ENCODE measurements at regions of chr1 and their contacts with region 1.

Region 1: DNA sequence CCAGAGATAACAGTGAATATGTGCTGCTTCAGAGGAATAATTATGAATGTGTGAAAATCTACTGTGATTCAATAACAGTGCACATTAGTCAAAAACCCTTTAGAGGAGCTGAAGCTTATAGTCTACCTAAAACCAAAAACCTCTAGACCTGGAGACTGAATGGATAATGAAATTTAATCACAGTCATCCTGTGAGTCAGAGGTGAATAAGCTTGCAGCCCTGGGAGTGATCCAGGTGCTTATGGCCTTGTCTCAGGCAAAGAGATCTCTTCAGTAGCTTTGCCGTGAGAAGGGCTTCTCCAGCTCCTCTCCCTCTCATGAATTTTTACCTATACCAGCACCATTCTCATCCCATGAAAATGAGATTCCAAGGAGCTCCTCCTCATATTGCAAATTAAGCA is 81.3 kb upstream of the RGS4 start:
- DNase-seq: peak; percentile 97
- ATAC-seq: peak; percentile 96
- H3K4me3 ChIP-seq: no peak overlapping the region
- H3K27ac ChIP-seq: peak overlapping the region; percentile 75
- H3K4me1 ChIP-seq: peaks cover 30% of the 10 kb centered on the region
- H3K27me3 ChIP-seq: no peaks in the 10 kb centered on the region
- CTCF ChIP-seq: no peak

Region 2: DNA sequence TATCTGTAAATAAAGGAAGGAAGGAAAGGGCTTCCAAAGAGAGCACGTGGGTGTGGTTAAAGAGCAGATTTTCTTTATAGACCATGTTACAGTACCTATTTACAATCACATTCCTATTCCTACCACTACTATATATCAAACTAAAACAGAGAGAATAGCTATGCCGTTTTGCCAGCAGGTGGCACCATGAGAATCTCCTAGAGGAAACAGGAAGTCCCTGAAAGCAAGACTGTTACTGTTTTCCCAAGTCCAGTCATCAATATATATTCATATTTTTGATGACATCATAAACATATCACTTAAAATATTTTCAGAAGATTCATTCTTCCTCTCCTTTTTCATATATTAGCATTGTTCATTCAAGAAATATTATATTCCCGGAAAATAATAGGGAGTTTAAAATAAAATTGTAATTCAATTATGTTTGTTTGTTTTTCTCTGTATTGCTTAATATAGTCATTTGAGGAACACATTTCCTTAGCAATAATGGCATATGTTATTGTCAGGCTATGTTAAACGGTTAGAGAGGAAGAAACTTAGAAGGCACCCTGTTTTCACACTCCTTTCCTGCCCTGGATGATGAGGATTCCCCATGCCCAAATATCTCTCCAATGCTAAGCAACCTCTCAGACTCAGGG is 133.5 kb before region 1 on chr1:
- CTCF ChIA-PET with region 1: no interaction called
- POLR2A ChIA-PET with region 1: no interaction called
- intact Hi-C with region 1: loop called (anchors 5 kb)
- DNase-seq: peak; percentile 93
- ATAC-seq: peak; percentile 52
- H3K4me3 ChIP-seq: no peak overlapping the region
- H3K27ac ChIP-seq: peak overlapping the region; percentile 81
- H3K4me1 ChIP-seq: peaks cover 49% of the 10 kb centered on the region
- H3K27me3 ChIP-seq: no peaks in the 10 kb centered on the region
- CTCF ChIP-seq: peak; percentile 97

Region 3: DNA sequence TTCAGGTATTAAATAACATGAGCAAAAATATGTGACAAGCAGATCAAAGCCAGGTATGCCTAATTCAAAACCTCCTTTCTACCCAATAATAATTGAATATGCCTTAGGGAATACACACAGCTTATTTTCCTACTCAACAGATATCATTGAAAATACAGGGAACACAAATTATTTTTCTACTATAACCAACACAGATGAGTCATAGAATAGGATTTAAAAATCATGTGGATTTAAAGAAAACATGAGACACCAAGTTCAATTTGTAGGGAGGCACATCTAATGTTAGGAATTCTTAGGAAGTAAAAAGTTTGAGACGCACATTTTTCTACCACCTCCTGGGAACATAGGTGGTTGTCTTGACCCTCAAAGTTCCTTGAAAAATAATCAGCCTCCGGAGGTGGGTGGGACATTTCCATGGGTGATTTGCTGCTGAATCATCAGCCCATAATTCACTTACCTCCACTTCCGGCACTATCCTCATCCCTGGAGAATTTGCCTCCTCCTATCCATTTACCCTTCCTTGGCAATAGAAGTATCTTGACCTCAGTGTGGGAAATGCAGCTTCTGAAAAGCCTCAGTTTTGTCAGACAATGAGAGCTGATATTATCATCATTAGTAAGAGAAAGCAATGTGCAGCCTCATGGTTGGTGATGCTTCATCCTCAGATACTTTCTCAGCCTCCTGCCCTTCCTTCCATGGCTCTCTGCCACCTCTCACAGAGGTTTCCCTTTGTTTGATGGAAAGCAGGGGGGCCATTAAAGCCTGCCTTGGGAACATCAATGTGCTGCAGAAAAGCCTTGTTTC is 47.8 kb after region 1 on chr1:
- CTCF ChIA-PET with region 1: no interaction called
- POLR2A ChIA-PET with region 1: no interaction called
- intact Hi-C with region 1: loop called (anchors 2 kb)
- DNase-seq: peak; percentile 98
- ATAC-seq: peak; percentile 86
- H3K4me3 ChIP-seq: peak overlapping the region; percentile 1; the same call in 1 of the 2 replicates
- H3K27ac ChIP-seq: peak overlapping the region; percentile 86
- H3K4me1 ChIP-seq: peaks cover 38% of the 10 kb centered on the region
- H3K27me3 ChIP-seq: no peaks in the 10 kb centered on the region
- CTCF ChIP-seq: no peak

Region 4: DNA sequence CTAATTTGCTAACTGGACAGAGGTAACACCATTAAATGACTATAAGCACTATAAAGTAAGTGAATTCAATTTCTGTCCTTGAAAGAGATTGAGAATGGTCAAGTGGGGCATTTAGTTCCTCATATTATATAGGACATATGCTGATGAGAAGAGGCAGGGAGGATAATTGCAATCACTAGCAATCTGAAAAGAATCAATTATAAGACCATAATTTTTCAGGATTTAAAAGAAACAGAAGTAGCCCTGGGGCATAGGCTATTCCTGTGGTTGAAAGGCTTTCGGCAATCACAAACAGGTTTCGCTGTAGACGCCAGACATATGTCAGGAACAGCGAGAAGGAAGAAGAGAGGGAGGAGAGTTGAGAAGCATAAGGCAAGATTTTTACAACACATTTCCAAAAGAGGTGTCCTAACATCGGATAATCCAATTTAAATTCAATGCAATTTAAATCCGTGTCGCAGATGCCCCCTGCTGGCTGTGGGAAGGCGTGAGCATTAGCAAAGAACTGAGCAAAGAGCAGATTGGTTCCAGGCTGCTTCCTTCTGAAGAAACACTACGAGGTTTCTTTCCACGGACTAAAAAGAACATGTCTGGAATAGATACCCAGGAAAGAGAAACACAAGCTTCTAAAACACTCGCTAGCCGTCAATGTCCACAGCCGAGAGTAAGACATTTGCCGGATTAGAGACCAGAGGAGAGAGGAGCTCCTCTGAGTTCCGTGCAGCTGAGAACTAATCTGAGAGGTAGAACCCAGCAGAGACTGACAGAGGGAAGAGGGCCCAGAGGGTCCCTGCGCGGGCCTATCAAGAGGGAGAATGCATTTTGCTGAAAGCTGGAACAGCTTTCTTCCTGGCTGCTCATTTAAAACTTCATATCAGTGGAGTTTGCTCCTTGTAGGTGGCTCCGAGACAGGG is 186.9 kb after region 1 on chr1:
- CTCF ChIA-PET with region 1: no interaction called
- POLR2A ChIA-PET with region 1: no interaction called
- intact Hi-C with region 1: no loop called
- DNase-seq: peak; percentile 85
- ATAC-seq: peak; percentile 50
- H3K4me3 ChIP-seq: peak overlapping the region; percentile 55; the same call in 1 of the 2 replicates
- H3K27ac ChIP-seq: 0 out of 2 replicates have a peak overlapping the region, but pooled peaks have one; percentile 1
- H3K4me1 ChIP-seq: peaks cover 46% of the 10 kb centered on the region
- H3K27me3 ChIP-seq: no peaks in the 10 kb centered on the region
- CTCF ChIP-seq: peak; percentile 99

Measured in PC-3 (cell line).